B cell (primary cell): ENCODE measurements at regions of chr4 and their contacts with region 1.

Region 1: DNA sequence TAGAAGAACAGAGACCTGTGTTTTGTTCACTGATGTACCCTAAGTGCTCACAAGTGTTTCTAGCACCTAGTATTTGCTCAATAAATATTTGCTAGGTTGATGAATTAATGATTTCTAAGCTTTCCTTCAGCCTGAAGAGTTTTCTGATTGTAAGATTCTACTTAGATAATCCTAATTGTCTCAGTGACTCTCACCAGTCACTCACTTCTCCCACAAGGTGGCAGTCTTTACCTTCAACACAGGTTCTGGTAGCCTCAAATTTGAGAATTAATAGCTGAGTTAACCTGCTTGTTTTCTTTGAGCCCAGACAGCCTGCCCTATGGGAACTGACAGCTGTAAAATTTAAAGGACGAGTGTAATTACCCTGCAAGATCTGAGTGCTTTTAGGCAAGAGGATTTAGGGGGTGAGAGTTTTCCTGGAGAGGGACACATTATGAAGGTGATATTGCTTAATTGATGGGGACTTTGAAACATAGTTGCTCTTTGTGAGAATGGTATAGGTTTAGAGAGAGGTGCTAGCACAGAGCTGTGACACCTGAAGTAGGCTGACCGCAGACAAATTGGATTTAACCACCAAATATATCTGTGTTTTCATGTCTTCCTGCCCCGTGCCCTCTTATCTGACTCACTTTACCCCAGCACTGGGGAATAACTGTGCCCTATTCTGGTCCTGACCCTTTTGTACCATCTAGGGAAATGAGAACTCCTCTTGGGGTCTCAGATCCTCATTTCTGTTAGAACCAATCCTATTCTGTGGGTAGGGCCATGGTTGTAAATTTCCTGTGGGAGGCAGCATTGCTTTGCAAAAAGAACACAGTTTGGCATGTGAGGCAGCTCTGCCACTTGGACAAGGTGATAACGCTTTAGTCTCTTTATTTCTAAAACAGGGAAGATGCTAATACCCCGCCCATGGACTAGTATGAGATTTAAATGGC is 27.7 kb downstream of the CD38 start:
- DNase-seq: peak; percentile 62
- ATAC-seq: peak; percentile 67
- H3K4me3 ChIP-seq: no peak overlapping the region
- H3K4me3 Mint-ChIP-seq: no peak overlapping the region
- H3K27ac ChIP-seq: no peak overlapping the region
- H3K27ac Mint-ChIP-seq: no peak overlapping the region
- H3K4me1 ChIP-seq: peaks cover 27 to 30% of the 10 kb centered on the region in 2 donors
- H3K4me1 Mint-ChIP-seq: peaks cover 44% of the 10 kb centered on the region
- H3K27me3 ChIP-seq: no peaks in the 10 kb centered on the region
- H3K27me3 Mint-ChIP-seq: no peaks in the 10 kb centered on the region
- CTCF ChIP-seq: peak; percentile 84

Region 2: DNA sequence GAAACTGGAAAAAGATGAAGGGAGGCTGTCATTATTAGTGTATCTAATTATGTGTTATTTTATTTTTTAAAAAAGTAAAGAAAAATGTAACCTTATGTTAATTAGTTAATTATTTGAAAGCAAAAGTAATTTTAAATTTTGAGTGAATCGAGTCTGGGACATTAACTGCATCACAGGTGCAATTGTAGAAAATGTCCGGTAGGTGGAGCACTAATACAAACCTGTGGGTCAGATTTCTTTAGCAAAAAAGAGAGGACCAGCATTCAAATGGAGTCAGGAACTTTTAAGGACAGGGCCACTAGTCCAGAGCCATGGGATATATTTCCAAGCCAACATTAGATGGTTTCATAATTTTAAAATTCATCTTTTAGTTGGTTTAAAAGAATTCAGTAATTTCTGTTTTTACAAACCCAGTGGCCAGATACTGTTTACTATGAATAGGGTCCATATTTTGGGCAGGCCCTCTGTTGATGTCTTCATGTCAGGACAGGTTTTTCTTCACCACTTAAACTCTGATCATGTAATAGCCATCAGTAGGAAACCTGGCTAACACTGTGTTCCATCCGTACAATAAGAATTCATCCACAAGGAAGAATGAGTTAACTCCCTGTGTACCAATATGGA is 75.8 kb before region 1 on chr4:
- CTCF ChIA-PET with region 1: interaction called, 10 read pairs
- POLR2A ChIA-PET with region 1: no interaction called
- intact Hi-C with region 1: loop called (anchors 2 kb)
- DNase-seq: peak; percentile 62
- ATAC-seq: peak; percentile 47
- H3K4me3 ChIP-seq: no peak overlapping the region
- H3K4me3 Mint-ChIP-seq: no peak overlapping the region
- H3K27ac ChIP-seq: no peak overlapping the region
- H3K27ac Mint-ChIP-seq: no peak overlapping the region
- H3K4me1 ChIP-seq: no peaks in the 10 kb centered on the region
- H3K4me1 Mint-ChIP-seq: no peaks in the 10 kb centered on the region
- H3K27me3 ChIP-seq: no peaks in the 10 kb centered on the region
- H3K27me3 Mint-ChIP-seq: peaks cover 7% of the 10 kb centered on the region
- CTCF ChIP-seq: peak; percentile 99

Region 3: DNA sequence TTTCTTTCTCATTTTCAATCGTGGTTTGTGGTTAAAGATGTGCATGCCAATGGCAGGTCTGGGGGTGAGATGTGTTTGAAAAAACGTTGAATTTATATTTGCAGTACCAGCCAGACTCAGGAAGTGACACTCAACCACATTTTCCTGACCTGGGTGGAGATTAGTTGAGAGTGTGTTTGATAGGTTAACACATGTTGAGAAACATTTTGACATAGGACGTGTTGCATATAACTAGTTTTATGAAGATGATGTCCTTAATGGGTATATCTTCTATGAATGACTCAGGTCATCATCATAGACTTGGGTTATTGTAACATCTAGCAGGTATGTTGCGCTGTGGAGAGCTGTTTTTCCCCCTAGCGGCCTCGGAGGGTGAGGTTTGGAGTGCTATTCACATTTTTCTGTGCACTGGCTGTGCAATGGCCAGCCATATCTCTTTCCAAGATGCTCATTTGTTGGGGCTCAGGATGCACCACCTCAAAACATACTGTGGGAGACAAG is 49.4 kb before region 1 on chr4:
- CTCF ChIA-PET with region 1: interaction called, 12 read pairs
- POLR2A ChIA-PET with region 1: no interaction called
- intact Hi-C with region 1: no loop called
- DNase-seq: peak; percentile 61
- ATAC-seq: peak; percentile 81
- H3K4me3 ChIP-seq: peak overlapping the region; percentile 12 to 44 (median 29)
- H3K4me3 Mint-ChIP-seq: peak overlapping the region; percentile 63
- H3K27ac ChIP-seq: no peak overlapping the region
- H3K27ac Mint-ChIP-seq: peak overlapping the region; percentile 38
- H3K4me1 ChIP-seq: peaks cover 24 to 28% of the 10 kb centered on the region in 2 donors
- H3K4me1 Mint-ChIP-seq: peaks cover 34% of the 10 kb centered on the region
- H3K27me3 ChIP-seq: no peaks in the 10 kb centered on the region
- H3K27me3 Mint-ChIP-seq: no peaks in the 10 kb centered on the region
- CTCF ChIP-seq: peak; percentile 67

Region 4: DNA sequence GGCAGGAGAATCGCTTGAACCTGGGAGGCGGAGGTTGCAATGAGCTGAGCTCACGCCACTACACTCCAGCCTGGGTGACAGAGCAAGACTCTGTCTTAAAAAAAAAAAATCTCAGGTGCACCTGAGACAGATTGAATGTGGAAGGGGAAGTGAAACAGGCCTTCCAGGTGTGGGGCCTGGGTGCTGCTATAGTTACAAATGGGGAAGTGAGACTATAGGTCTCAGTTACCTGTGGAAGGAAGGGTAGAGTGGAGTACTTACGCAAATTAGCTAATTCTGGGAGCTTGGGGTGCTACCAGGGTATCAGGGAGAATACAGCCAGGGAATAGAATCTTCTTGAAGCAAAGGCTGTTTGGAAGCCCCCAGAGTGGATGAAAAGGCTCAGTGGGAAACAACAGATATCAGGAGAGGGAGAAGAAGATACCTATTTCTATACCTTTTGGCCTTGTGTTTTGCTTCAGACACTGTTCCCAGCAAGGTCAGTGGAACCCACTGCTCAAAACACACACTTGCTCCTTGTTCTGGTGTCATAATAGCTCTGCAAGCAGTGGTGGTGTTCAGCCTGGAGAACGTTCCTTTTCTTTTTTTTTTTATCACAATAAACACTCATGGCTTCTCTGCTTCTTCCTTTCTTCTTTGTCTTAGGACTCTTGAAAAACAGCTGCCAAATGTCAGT is 20.8 kb before region 1 on chr4:
- CTCF ChIA-PET with region 1: interaction called, 16 read pairs
- POLR2A ChIA-PET with region 1: no interaction called
- intact Hi-C with region 1: no loop called
- DNase-seq: peak; percentile 86
- ATAC-seq: peak; percentile 88
- H3K4me3 ChIP-seq: no peak overlapping the region
- H3K4me3 Mint-ChIP-seq: peak overlapping the region; percentile 66
- H3K27ac ChIP-seq: peak overlapping the region; percentile 20 to 21
- H3K27ac Mint-ChIP-seq: peak overlapping the region; percentile 87
- H3K4me1 ChIP-seq: peaks cover 48 to 53% of the 10 kb centered on the region in 2 donors
- H3K4me1 Mint-ChIP-seq: peaks cover 58% of the 10 kb centered on the region
- H3K27me3 ChIP-seq: no peaks in the 10 kb centered on the region
- H3K27me3 Mint-ChIP-seq: no peaks in the 10 kb centered on the region
- CTCF ChIP-seq: no peak

Region 5: GRCh38 chr4:15882675-15883086 is 76.8 kb after region 1 on chr4:
- CTCF ChIA-PET with region 1: interaction called, 64 read pairs
- POLR2A ChIA-PET with region 1: no interaction called
- intact Hi-C with region 1: loop called (anchors 5 kb)
- DNase-seq: peak; percentile 71
- ATAC-seq: peak; percentile 65
- H3K4me3 ChIP-seq: no peak overlapping the region
- H3K4me3 Mint-ChIP-seq: no peak overlapping the region
- H3K27ac ChIP-seq: no peak overlapping the region
- H3K27ac Mint-ChIP-seq: no peak overlapping the region
- H3K4me1 ChIP-seq: no peaks in the 10 kb centered on the region
- H3K4me1 Mint-ChIP-seq: peaks cover 2% of the 10 kb centered on the region
- H3K27me3 ChIP-seq: peaks cover 0 to 3% (median 0%) of the 10 kb centered on the region in 4 experiments
- H3K27me3 Mint-ChIP-seq: peaks cover 4% of the 10 kb centered on the region
- CTCF ChIP-seq: peak; percentile 91

Region 6: GRCh38 chr4:15956179-15956850 is 150.5 kb after region 1 on chr4:
- CTCF ChIA-PET with region 1: interaction called, 77 read pairs
- POLR2A ChIA-PET with region 1: no interaction called
- intact Hi-C with region 1: loop called (anchors 1 kb)
- DNase-seq: peak; percentile 81
- ATAC-seq: peak; percentile 98
- H3K4me3 ChIP-seq: no peak overlapping the region
- H3K4me3 Mint-ChIP-seq: no peak overlapping the region
- H3K27ac ChIP-seq: no peak overlapping the region
- H3K27ac Mint-ChIP-seq: no peak overlapping the region
- H3K4me1 ChIP-seq: peaks cover 0 to 3% of the 10 kb centered on the region in 2 donors
- H3K4me1 Mint-ChIP-seq: peaks cover 9% of the 10 kb centered on the region
- H3K27me3 ChIP-seq: no peaks in the 10 kb centered on the region
- H3K27me3 Mint-ChIP-seq: peaks cover 6% of the 10 kb centered on the region
- CTCF ChIP-seq: peak; percentile 81

Region 7: GRCh38 chr4:16001484-16001858 is 195.6 kb after region 1 on chr4:
- CTCF ChIA-PET with region 1: interaction called, 61 read pairs
- POLR2A ChIA-PET with region 1: no interaction called
- intact Hi-C with region 1: loop called (anchors 1 kb)
- DNase-seq: peak; percentile 68
- ATAC-seq: peak; percentile 81
- H3K4me3 ChIP-seq: no peak overlapping the region
- H3K4me3 Mint-ChIP-seq: no peak overlapping the region
- H3K27ac ChIP-seq: no peak overlapping the region
- H3K27ac Mint-ChIP-seq: no peak overlapping the region
- H3K4me1 ChIP-seq: no peaks in the 10 kb centered on the region
- H3K4me1 Mint-ChIP-seq: no peaks in the 10 kb centered on the region
- H3K27me3 ChIP-seq: no peaks in the 10 kb centered on the region
- H3K27me3 Mint-ChIP-seq: no peaks in the 10 kb centered on the region
- CTCF ChIP-seq: peak; percentile 82